Activated B cell treated with CpG ODN at 0.5 μM for 24 hours (primary cell): ENCODE measurements at regions of chr1 and their contacts with region 1.

Region 1: DNA sequence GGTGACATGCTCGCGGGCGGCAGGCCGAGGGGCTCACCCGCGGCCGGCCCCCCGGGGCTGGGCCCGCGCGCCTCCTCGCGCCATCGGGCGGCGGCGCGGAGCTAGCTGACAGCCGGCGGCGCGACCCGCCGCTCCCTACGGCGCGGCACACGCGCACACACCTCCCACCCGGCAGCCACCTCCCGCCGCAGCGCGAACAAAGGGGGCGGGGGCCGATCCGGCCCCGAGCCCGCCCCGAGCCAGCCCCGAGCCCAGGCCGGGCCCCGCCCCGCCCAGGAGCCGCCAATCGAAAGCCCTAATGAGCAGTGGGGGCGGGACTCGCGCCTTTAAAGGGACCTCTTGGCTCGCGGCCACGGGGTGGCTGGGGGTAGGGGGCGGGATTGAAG is at the start of gene KIF21B:
- DNase-seq: peak; percentile 90
- ATAC-seq: peak; percentile 83
- H3K4me3 Mint-ChIP-seq: peak within 1 kb of the TSS; percentile 89
- H3K27ac Mint-ChIP-seq: peak within 1 kb of the TSS; percentile 97
- H3K4me1 Mint-ChIP-seq: peaks cover 79% of the 10 kb centered on the region
- H3K27me3 Mint-ChIP-seq: no peaks in the 10 kb centered on the region
- CTCF ChIP-seq: no peak
- total RNA-seq, gene KIF21B: 28.1 and 31.8 TPM in 2 replicates

Region 2: DNA sequence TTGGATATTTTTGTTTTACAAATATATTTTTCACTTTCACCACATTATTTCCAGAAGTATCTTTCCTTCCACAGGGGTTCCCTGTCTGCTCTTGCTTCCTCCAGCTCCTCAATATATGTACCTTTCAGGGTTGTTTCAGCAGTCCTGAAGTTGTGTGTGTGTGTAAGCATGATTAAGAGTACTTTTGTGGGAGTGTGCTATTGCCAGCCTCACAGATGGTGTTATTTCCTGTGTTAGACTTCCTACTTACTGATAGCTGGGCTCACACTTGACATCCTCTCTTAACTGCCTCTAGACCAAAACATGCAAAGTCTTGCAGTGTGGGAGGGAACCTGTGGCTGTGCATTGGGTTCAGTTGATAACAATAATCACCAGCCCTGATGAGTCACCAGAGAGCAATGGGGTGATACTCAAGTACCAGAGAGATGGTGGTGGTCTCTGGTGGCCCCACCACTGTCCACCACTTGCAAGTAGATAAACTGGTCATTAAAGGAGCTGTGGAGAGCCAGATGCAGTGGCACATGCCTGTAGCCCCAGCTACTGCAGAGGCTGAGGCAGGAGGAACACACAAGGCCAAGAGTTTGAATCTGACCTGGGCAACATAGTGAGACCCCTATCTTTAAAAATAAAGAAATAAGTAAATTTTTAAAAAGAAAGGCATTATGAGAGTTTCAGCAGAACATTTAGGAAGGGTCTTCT is 869.3 kb before region 1 on chr1:
- CTCF ChIA-PET with region 1: no interaction called
- POLR2A ChIA-PET with region 1: interaction called, 3 read pairs
- intact Hi-C with region 1: loop called (anchors 5 kb)
- DNase-seq: peak; percentile 23
- ATAC-seq: peak; percentile 87
- H3K4me3 Mint-ChIP-seq: peak overlapping the region; percentile 61
- H3K27ac Mint-ChIP-seq: peak overlapping the region; percentile 92
- H3K4me1 Mint-ChIP-seq: peaks cover 55% of the 10 kb centered on the region
- H3K27me3 Mint-ChIP-seq: no peaks in the 10 kb centered on the region
- CTCF ChIP-seq: no peak

Region 3: DNA sequence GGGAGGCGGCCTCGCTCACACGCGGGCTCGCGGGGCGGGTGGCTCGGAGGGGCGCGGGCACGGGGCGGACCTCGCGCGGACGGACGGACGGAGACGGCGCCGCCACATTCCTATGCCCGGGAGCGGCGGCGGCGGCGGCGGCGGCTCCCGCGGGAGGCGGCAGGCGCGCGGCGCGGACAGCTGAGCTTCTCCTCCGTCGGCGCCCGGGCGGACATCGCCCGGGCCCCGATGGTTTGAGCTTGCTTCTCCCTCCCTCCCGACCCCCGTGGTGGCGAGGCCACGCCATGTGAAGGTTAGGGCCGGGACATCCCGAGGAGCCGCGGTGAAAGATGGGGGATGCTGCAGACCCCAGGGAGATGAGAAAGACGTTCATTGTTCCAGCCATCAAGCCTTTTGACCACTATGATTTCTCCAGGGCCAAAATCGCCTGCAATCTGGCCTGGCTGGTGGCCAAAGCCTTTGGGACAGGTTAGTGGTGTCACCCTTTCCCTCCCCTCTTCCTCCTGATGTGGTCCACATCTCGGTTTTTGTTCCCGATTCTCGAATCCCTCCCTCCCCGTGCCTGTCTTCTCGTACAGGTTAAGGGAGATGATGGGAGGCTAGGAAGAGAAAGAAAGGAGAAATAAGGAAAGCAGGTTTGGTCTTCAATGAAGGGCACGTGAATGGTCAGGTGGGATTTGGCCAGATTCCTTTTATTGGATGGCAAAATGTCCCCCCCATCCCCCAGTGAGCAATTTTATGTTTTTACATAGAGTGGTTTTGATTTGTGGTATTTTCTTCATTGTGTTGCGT is 283.8 kb before region 1 on chr1:
- CTCF ChIA-PET with region 1: no interaction called
- POLR2A ChIA-PET with region 1: no interaction called
- intact Hi-C with region 1: no loop called
- DNase-seq: no peak
- ATAC-seq: no peak
- H3K4me3 Mint-ChIP-seq: peak overlapping the region; percentile 91
- H3K27ac Mint-ChIP-seq: no peak overlapping the region
- H3K4me1 Mint-ChIP-seq: peaks cover 17% of the 10 kb centered on the region
- H3K27me3 Mint-ChIP-seq: peaks cover 23% of the 10 kb centered on the region
- CTCF ChIP-seq: no peak

Region 4: GRCh38 chr1:200866521-200866920 is 157.0 kb before region 1 on chr1:
- CTCF ChIA-PET with region 1: no interaction called
- POLR2A ChIA-PET with region 1: no interaction called
- intact Hi-C with region 1: loop called (anchors 5 kb)
- DNase-seq: no peak
- ATAC-seq: peak; percentile 67
- H3K4me3 Mint-ChIP-seq: no peak overlapping the region
- H3K27ac Mint-ChIP-seq: no peak overlapping the region
- H3K4me1 Mint-ChIP-seq: peaks cover 64% of the 10 kb centered on the region
- H3K27me3 Mint-ChIP-seq: peaks cover 3% of the 10 kb centered on the region
- CTCF ChIP-seq: no peak

Region 5: DNA sequence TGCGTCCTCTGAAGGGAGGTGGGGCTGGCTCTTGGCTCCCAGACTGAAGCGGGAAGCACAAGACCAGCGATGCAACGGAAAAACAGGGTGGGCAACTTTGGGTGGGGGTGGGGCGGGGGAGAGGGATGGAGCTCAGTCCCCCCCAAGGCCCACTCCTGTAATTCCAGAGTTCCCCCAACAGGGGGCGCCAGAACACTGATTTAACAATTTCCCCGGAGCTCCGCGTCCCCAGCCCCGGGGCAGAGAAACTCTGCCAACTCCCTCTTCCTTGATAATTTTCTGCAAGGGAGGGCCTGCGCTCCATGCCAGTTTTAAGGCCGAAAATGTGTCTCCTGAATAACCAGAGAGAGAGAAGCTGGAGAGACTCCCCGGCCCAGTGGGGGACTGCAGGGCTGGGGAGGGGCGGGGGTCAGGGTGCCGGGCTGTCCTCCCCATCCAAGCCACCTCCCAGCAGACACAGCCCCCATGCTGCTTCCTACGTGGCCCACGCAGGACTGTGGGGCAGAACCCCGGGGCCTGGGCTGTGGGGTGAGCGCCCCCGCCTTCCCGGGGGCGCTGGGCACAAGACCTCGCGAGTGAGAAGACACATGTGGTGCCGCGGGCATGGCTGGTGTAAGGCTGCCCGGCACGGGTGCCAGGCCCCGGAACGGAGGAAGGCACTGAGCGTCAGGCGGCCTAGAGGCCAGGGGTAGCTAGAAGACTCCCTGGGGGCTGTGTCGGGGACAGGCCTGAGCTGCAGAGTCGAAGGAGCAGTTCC is 51.4 kb before region 1 on chr1:
- CTCF ChIA-PET with region 1: interaction called, 53 read pairs
- POLR2A ChIA-PET with region 1: no interaction called
- intact Hi-C with region 1: no loop called
- DNase-seq: peak; percentile 59
- ATAC-seq: peak; percentile 53
- H3K4me3 Mint-ChIP-seq: no peak overlapping the region
- H3K27ac Mint-ChIP-seq: no peak overlapping the region
- H3K4me1 Mint-ChIP-seq: peaks cover 10% of the 10 kb centered on the region
- H3K27me3 Mint-ChIP-seq: no peaks in the 10 kb centered on the region
- CTCF ChIP-seq: peak; percentile 100

Region 6: GRCh38 chr1:200991097-200991614 is 32.4 kb before region 1 on chr1:
- CTCF ChIA-PET with region 1: no interaction called
- POLR2A ChIA-PET with region 1: interaction called, 16 read pairs
- intact Hi-C with region 1: no loop called
- DNase-seq: no peak
- ATAC-seq: no peak
- H3K4me3 Mint-ChIP-seq: no peak overlapping the region
- H3K27ac Mint-ChIP-seq: no peak overlapping the region
- H3K4me1 Mint-ChIP-seq: no peaks in the 10 kb centered on the region
- H3K27me3 Mint-ChIP-seq: no peaks in the 10 kb centered on the region
- CTCF ChIP-seq: no peak

Region 7: GRCh38 chr1:201154389-201155165 is 131.1 kb after region 1 on chr1 and contains the start of gene TMEM9:
- CTCF ChIA-PET with region 1: no interaction called
- POLR2A ChIA-PET with region 1: interaction called, 6 read pairs
- intact Hi-C with region 1: loop called (anchors 1 kb)
- DNase-seq: peak; percentile 98
- ATAC-seq: peak; percentile 98
- H3K4me3 Mint-ChIP-seq: peak within 1 kb of the TSS; percentile 92
- H3K27ac Mint-ChIP-seq: peak within 1 kb of the TSS; percentile 89
- H3K4me1 Mint-ChIP-seq: peaks cover 16% of the 10 kb centered on the region
- H3K27me3 Mint-ChIP-seq: peaks cover 5% of the 10 kb centered on the region
- CTCF ChIP-seq: no peak
- total RNA-seq, gene TMEM9: 19.0 and 21.7 TPM in 2 replicates

Region 8: DNA sequence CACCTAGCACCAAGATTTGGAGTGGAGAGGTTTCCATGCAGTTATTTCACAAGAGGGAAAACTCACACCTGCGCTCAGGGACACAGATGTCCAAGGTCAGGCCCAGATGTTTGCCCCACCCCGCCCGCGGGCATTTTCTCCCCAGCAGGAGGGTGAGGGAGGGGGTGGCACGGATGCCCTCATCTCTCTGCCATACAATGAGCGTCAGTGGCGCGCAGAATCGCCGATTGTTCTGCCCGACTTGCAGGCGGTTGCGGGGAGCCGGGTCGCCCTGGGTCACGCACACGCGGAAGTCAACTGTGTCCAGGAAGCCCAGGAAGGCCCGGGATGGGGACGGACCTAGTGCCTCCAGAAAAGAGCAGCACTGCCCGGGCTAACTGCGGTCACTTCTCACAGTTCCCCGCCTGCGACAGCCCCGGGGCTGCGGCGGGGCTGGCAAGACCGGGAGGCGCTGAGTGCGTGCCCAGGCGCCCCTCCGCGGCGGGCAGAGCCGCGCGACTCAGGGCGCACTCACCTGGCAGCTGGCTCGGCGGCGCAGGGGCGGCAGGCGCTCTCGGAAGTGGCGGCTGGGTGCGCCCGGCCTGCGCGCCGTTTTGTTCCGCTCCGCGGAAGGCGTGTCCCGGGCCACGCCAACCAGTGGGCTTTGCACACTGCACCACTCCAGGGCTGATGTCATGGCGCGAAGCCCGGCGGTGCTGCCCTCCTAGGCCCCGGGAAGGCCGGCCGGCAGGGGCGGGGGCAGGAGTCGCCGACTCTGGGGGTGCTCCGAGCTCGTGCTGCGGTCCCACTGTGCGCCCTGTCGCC is 483.2 kb after region 1 on chr1 and contains the start of gene CSRP1:
- CTCF ChIA-PET with region 1: no interaction called
- POLR2A ChIA-PET with region 1: no interaction called
- intact Hi-C with region 1: loop called (anchors 10 kb)
- DNase-seq: peak; percentile 66
- ATAC-seq: peak; percentile 96
- H3K4me3 Mint-ChIP-seq: peak within 1 kb of the TSS; percentile 88
- H3K27ac Mint-ChIP-seq: peak within 1 kb of the TSS; percentile 76
- H3K4me1 Mint-ChIP-seq: peaks cover 31% of the 10 kb centered on the region
- H3K27me3 Mint-ChIP-seq: no peaks in the 10 kb centered on the region
- CTCF ChIP-seq: no peak
- total RNA-seq, gene CSRP1: 29.0 and 29.5 TPM in 2 replicates